RWPE1 (cell line): ENCODE measurements at regions of chr17 and their contacts with region 1.

Region 1: DNA sequence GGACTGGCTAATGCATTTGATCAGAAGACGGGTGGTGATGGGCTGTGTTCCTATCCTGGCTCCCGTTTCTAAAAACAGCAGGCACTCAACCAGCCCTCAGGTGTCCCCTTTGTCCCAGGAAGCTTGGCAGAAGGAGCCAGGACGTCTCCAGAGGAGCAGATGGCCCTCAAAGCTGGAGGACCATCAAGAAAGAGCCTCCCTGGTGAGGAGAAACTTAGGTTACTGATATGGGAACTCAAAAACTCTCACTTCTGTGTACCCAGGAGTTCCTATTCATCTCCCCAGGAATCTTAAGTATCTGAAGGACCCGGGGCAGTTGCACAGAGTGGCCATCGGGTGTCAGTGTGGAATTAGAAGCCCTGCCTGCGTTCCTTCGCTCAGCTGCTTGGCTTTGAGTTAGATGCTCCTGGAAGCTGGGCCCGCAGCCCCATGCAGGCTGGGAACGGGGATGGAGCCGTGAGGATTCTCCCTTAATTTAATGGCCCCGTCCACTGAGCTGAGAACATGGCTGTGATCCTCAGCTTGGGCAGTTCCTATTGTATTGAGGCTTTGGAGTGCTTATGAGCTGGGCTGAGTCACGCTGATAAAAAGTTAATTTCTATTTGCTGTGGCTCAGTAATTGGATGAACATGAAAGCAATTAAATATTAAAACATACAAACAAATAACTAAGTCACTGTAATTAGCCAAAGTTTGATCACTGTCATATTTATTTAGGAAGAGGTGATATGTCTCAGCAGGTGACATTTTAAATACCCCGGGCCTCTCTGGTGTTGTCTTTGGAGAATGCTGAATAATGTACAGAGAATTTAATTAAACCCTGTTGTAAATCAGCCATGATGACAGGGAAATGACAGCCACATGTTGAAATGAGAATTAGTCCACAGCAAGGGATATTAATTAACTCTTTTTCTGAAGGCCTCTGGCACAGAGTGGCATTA is 402.1 kb downstream of the SEC14L1 start:
- DNase-seq: peak; percentile 81
- H3K27ac ChIP-seq: no peak overlapping the region
- CTCF ChIP-seq: peak; percentile 98

Region 2: DNA sequence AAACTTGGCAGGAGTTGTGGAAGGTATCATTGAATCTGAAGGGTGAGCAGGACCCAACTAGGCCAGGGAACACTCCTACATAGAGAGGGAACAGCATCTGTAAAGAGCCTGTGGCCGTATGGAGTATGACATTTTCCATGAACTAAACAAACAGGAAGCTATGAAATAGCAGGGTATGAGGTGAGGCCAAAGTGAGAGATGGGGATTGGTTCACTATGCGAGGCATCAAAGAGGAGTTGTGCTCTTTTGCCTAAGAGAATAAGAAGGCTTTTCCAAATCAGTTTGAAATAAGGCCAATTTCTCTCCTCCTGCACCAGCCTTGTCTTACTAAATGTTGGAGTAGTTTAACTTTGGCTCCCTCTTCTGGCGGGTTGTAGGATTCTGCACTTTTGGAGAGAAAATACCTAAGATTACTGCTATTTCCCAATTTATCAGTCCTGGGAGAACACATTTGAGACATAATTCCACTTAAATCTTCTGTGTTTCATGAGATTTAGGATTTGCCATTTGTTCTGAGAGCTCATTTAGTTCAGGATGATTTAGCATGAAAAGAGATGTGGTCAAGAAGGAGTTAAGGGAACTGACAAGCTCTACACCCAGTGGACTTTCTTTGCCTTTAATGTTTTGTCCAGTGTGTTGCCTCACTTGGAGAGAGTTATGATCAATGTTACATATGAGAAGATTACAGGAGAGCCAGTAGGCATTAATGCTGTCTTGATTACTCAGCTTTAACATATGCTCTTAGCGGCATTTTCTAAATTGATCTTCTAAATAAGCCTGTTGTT is 471.1 kb after region 1 on chr17:
- CTCF ChIA-PET with region 1: interaction called, 40 read pairs
- POLR2A ChIA-PET with region 1: no interaction called
- DNase-seq: peak; percentile 49
- H3K27ac ChIP-seq: no peak overlapping the region
- CTCF ChIP-seq: peak; percentile 90

Region 3: GRCh38 chr17:78019367-78019975 is 476.6 kb after region 1 on chr17:
- CTCF ChIA-PET with region 1: interaction called, 40 read pairs
- POLR2A ChIA-PET with region 1: no interaction called
- DNase-seq: no peak
- H3K27ac ChIP-seq: no peak overlapping the region
- CTCF ChIP-seq: peak; percentile 76